ENCODE measurements at regions of chr11 and their contacts with region 1.

Region 1: GRCh38 chr11:111454561-111455192 is 57.5 kb downstream of the BTG4 start:
- DNase-seq: no peak
- H3K4me3 Mint-ChIP-seq: no peak overlapping the region
- H3K27ac Mint-ChIP-seq: no peak overlapping the region
- H3K4me1 Mint-ChIP-seq: no peaks in the 10 kb centered on the region
- H3K27me3 Mint-ChIP-seq: peaks cover 9% of the 10 kb centered on the region

Region 2: DNA sequence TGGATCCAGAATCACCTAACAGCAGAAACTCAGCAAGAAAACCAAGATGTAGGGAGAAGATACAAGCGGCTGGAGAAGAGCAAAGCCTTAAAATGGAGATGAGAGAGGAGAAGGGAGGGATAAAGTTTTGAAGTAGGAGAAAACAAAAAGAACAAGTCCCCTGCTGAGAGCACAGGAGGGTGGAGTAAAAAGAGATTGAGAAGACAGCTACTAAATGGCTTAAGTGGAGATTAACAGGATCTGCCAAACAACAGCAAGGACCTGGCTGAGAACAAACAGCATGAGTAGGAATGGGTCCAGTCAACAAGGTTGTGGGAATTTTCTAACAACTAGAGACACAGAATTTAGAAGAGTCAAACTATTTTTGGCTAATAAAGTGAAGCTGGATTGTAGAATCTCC is 39.4 kb after region 1 on chr11:
- intact Hi-C with region 1: no loop called
- DNase-seq: no peak
- H3K4me3 Mint-ChIP-seq: no peak overlapping the region
- H3K27ac Mint-ChIP-seq: no peak overlapping the region
- H3K4me1 Mint-ChIP-seq: no peaks in the 10 kb centered on the region
- H3K27me3 Mint-ChIP-seq: peaks cover 40% of the 10 kb centered on the region

Region 3: DNA sequence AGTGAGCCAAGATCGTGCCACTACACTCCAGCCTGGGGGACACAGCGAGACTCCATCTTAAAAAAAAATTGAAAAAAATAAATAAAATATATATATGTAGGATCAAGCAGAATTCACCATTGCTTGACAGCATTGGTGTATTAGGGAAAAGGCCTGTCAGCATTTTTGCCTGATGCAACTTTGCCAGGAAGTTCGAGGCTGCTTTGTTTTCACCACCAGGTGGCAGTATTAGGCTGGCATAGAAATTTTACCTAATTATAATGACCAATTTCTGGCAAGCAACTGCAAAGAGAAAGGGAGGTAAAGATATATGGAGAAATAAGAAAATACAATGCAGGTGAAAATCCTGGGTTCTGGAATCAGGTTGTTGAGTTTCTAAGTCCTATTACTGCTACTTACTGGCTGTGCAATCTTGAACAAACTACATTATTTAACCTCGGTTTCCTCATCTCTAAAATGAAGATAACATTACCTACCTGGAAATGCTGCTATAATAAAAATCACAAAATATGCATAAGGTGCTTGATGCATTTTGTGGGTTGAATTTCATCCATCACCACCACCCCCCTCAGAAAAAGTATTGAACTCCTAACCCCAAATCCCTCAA is 110.5 kb after region 1 on chr11:
- intact Hi-C with region 1: loop called (anchors 5 kb)
- DNase-seq: peak; percentile 29
- H3K4me3 Mint-ChIP-seq: no peak overlapping the region
- H3K27ac Mint-ChIP-seq: no peak overlapping the region
- H3K4me1 Mint-ChIP-seq: no peaks in the 10 kb centered on the region
- H3K27me3 Mint-ChIP-seq: peaks cover 3% of the 10 kb centered on the region

Measured in activated T-helper 2 cell treated with anti-CD3 and anti-CD28 coated beads, Interferon-gamma antibody, Interleukin-2, Interleukin-4, amounts not matched to agents 10 μg/mL and 5 μg/mL and 100 μg/mL, durations not matched to agents 14 hours and 24 hours and 36 hours (primary cell).